HEK293 (cell line): ENCODE measurements at regions of chr7 and their contacts with region 1.

Region 1: GRCh38 chr7:73606801-73607691 is 17.3 kb downstream of the MLXIPL start:
- H3K4me3 ChIP-seq: no peak overlapping the region
- H3K27ac ChIP-seq: no peak overlapping the region
- H3K4me1 ChIP-seq: no peaks in the 10 kb centered on the region
- CTCF ChIP-seq: peak; percentile 52; the same call in 1 of the 2 replicates

Region 2: DNA sequence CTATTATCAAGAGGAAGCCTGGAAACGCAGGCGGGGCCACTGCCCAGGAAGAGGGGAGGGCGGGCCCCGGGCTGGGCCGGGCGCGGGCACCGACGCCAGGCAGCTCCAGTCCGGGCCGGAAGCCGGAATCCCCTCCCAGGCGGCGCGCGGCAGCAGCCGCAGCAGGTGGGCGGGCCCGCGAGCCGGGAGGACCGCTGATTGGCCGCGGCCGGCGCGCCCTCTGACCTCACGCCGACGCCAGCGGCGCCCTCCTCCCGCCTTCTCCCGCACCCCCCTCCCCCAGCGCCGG is 50.0 kb before region 1 on chr7:
- CTCF ChIA-PET with region 1: no interaction called
- POLR2A ChIA-PET with region 1: no interaction called
- H3K4me3 ChIP-seq: peak overlapping the region; percentile 94
- H3K27ac ChIP-seq: peak overlapping the region; percentile 96
- H3K4me1 ChIP-seq: peaks cover 3% of the 10 kb centered on the region; the same call in 1 of the 2 replicates
- CTCF ChIP-seq: no peak

Region 3: GRCh38 chr7:73667344-73668102 is 60.5 kb after region 1 on chr7 and contains the start of gene VPS37D:
- CTCF ChIA-PET with region 1: interaction called, 29 read pairs
- POLR2A ChIA-PET with region 1: no interaction called
- H3K4me3 ChIP-seq: peak within 1 kb of the TSS; percentile 58
- H3K27ac ChIP-seq: peak within 1 kb of the TSS; percentile 58; the same call in 1 of the 2 replicates
- H3K4me1 ChIP-seq: no peaks in the 10 kb centered on the region; the same call in 1 of the 2 replicates
- CTCF ChIP-seq: no peak

Region 4: GRCh38 chr7:73696372-73696771 is 89.3 kb after region 1 on chr7:
- CTCF ChIA-PET with region 1: interaction called, 12 read pairs
- POLR2A ChIA-PET with region 1: interaction called, 4 read pairs
- H3K4me3 ChIP-seq: no peak overlapping the region
- H3K27ac ChIP-seq: no peak overlapping the region
- H3K4me1 ChIP-seq: no peaks in the 10 kb centered on the region
- CTCF ChIP-seq: no peak

Region 5: GRCh38 chr7:73715648-73716317 is 108.7 kb after region 1 on chr7:
- CTCF ChIA-PET with region 1: interaction called, 17 read pairs
- POLR2A ChIA-PET with region 1: interaction called, 5 read pairs
- H3K4me3 ChIP-seq: no peak overlapping the region
- H3K27ac ChIP-seq: peak overlapping the region; percentile 6
- H3K4me1 ChIP-seq: peaks cover 18% of the 10 kb centered on the region
- CTCF ChIP-seq: no peak

Region 6: DNA sequence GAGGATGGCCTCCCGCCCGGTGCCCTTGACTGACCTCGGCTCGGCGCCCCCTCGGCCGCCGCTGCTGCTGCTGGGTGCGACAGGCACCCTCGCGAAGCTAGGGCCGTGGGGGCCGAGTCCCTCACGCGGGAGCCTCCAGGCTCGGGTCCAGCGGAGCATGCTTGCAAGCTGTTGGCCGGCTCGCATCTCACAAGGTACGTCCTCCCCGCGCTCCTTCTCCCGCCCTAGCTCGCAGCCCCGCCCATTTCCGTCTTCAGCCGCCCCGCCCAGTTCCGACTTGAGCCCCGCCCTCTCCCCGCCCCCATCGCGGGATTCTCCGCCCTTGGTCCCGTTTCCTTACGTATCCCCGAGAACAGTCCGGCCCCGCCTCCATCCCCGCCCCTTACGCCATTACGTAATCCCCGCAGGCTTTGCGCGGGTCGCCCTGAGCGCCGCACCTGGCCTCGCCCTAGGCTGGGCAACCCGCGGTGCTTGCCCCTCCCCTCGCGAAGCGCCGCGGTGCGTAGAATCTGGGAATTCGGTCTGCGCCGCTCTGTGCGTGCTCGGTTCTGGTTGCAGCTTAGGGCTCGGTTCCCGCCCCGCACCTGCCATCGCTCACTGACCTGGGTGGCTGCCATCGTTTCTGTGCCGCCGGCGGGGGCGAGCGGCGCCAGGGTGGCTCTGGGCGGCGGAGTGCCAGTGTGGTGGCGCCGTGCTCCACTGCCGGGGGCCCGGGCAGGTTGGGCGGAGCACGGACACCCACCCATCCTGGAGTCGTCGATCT is 131.7 kb after region 1 on chr7 and contains the start of gene ABHD11:
- CTCF ChIA-PET with region 1: interaction called, 59 read pairs
- POLR2A ChIA-PET with region 1: interaction called, 7 read pairs
- H3K4me3 ChIP-seq: peak within 1 kb of the TSS; percentile 67
- H3K27ac ChIP-seq: peak within 1 kb of the TSS; percentile 90
- H3K4me1 ChIP-seq: peaks cover 8% of the 10 kb centered on the region
- CTCF ChIP-seq: peak; percentile 72